ENCODE measurements at regions of chr12 and their contacts with region 1.

Region 1: GRCh38 chr12:81627336-81628189 is 131.6 kb downstream of the PPFIA2 start:
- DNase-seq: peak; percentile 26
- H3K4me3 ChIP-seq: no peak overlapping the region; a peak in 1 of 4 replicates
- H3K27ac ChIP-seq: no peak overlapping the region
- H3K4me1 ChIP-seq: no peaks in the 10 kb centered on the region; a peak in 1 of 4 replicates
- H3K27me3 ChIP-seq: no peaks in the 10 kb centered on the region
- CTCF ChIP-seq: peak; percentile 89
- EP300 ChIP-seq: no peak
- RAD21 ChIP-seq: peak; percentile 82

Region 2: GRCh38 chr12:81450920-81451739 is 176.4 kb before region 1 on chr12:
- CTCF ChIA-PET with region 1: interaction called, 19 read pairs
- POLR2A ChIA-PET with region 1: no interaction called
- DNase-seq: peak; percentile 56
- H3K4me3 ChIP-seq: no peak overlapping the region; a peak in 1 of 4 replicates
- H3K27ac ChIP-seq: no peak overlapping the region
- H3K4me1 ChIP-seq: no peaks in the 10 kb centered on the region
- H3K27me3 ChIP-seq: no peaks in the 10 kb centered on the region
- CTCF ChIP-seq: peak; percentile 76
- EP300 ChIP-seq: no peak
- RAD21 ChIP-seq: peak; percentile 69

Region 3: GRCh38 chr12:81888106-81888740 is 260.7 kb after region 1 on chr12:
- CTCF ChIA-PET with region 1: no interaction called
- POLR2A ChIA-PET with region 1: no interaction called
- DNase-seq: no peak
- H3K4me3 ChIP-seq: no peak overlapping the region
- H3K27ac ChIP-seq: no peak overlapping the region
- H3K4me1 ChIP-seq: no peaks in the 10 kb centered on the region
- H3K27me3 ChIP-seq: no peaks in the 10 kb centered on the region
- CTCF ChIP-seq: no peak
- EP300 ChIP-seq: no peak
- RAD21 ChIP-seq: no peak

Measured in SK-N-SH (cell line).